WTC11 (cell line): ENCODE measurements at regions of chr19 and their contacts with region 1.

Region 1: GRCh38 chr19:4524808-4525562 is 6.7 kb upstream of the PLIN4 start:
- DNase-seq: peak; percentile 87
- ATAC-seq: peak; percentile 82
- H3K4me3 Mint-ChIP-seq: no peak overlapping the region
- H3K27ac Mint-ChIP-seq: no peak overlapping the region
- H3K4me1 Mint-ChIP-seq: no peaks in the 10 kb centered on the region
- H3K27me3 Mint-ChIP-seq: peaks cover 35% of the 10 kb centered on the region
- CTCF ChIP-seq: peak; percentile 69; the same call in 1 of the 2 replicates

Region 2: DNA sequence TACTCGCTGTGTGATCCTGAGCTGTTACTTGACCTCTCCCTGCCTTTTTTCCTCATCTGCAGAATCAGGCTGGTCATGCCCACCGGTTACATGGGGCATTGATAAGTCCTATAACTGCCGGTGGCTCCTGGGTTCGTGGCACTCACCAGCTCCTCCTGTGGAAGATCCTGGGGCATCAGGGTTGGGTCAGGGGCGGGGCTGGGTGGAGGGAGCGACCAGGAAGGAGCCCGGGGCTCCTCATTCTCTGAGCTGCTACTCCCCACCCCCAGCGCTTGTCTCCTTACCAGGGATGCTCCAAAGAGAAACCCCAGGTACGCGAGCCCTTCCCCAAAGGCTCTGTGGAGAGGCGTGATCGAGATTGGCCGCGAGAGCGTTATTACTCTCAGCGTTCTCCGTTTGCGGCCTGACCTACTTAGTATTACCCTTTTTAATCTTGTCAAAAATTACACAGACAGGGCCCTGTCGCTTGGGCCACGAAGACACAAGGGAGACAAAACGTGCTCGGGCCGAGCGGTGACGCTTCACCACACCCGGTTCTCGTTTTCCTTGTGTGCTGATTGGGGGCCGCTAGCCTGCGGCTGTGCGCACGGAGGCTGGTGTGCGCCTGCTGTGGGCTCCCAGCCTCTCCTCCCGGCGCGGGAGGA is 42.1 kb before region 1 on chr19:
- CTCF ChIA-PET with region 1: interaction called, 12 read pairs
- POLR2A ChIA-PET with region 1: no interaction called
- DNase-seq: no peak
- ATAC-seq: peak; percentile 52; the same call in 1 of the 2 replicates
- H3K4me3 Mint-ChIP-seq: no peak overlapping the region
- H3K27ac Mint-ChIP-seq: no peak overlapping the region
- H3K4me1 Mint-ChIP-seq: no peaks in the 10 kb centered on the region
- H3K27me3 Mint-ChIP-seq: no peaks in the 10 kb centered on the region
- CTCF ChIP-seq: no peak

Region 3: DNA sequence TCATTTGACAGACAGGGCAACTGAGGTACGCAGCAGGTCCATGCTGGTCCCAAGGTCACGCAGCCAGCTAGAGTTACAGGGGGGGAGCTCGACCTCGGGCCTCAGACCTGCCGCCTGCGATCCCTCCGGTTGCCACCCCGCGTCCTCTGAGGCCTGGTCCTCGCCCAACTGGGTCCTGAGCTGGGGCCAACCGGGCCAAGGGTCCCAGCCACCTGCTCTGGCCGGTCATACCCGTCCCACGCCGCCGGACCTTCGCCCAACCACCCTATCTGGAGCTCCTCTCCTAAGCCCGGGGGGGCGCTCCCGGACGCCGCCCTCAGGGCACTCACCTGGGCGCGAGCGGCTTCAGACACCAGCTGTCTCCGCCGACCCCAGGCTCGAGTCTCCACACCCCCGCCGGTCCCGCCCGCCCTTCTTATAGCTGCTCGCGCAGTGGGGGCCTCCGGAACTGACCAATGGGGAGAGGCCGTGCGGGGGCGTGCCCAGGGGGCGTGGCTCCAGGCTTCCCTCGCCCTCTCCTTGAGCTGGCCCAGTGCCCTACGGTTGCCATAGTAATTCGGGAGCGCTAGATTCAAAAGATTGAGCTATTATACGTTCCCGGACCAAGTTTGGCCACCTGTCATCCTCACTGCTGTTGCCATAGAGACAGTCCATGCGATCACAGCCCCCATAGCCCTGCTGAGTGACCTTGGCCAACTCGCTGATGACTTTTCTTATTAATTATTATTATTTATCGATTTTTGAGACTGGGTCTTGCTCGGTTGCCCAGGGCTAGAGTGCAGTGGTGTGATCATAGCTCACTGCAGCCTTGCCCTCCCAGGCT is 10.1 kb after region 1 on chr19 and contains the start of gene PLIN5:
- CTCF ChIA-PET with region 1: interaction called, 285 read pairs
- POLR2A ChIA-PET with region 1: interaction called, 9 read pairs
- DNase-seq: peak; percentile 97
- ATAC-seq: peak; percentile 93
- H3K4me3 Mint-ChIP-seq: peak within 1 kb of the TSS; percentile 53
- H3K27ac Mint-ChIP-seq: no peak within 1 kb of the TSS
- H3K4me1 Mint-ChIP-seq: peaks cover 3% of the 10 kb centered on the region; the same call in 1 of the 2 replicates
- H3K27me3 Mint-ChIP-seq: peaks cover 60% of the 10 kb centered on the region
- CTCF ChIP-seq: no peak
- total RNA-seq, gene PLIN5: 3.3 to 4.2 TPM (median 3.9 TPM) in 3 replicates

Region 4: GRCh38 chr19:4606921-4607678 is 82.1 kb after region 1 on chr19:
- CTCF ChIA-PET with region 1: interaction called, 16 read pairs
- POLR2A ChIA-PET with region 1: no interaction called
- DNase-seq: peak; percentile 53
- ATAC-seq: peak; percentile 71
- H3K4me3 Mint-ChIP-seq: peak overlapping the region; percentile 27
- H3K27ac Mint-ChIP-seq: no peak overlapping the region
- H3K4me1 Mint-ChIP-seq: peaks cover 15% of the 10 kb centered on the region
- H3K27me3 Mint-ChIP-seq: peaks cover 30% of the 10 kb centered on the region
- CTCF ChIP-seq: no peak

Region 5: DNA sequence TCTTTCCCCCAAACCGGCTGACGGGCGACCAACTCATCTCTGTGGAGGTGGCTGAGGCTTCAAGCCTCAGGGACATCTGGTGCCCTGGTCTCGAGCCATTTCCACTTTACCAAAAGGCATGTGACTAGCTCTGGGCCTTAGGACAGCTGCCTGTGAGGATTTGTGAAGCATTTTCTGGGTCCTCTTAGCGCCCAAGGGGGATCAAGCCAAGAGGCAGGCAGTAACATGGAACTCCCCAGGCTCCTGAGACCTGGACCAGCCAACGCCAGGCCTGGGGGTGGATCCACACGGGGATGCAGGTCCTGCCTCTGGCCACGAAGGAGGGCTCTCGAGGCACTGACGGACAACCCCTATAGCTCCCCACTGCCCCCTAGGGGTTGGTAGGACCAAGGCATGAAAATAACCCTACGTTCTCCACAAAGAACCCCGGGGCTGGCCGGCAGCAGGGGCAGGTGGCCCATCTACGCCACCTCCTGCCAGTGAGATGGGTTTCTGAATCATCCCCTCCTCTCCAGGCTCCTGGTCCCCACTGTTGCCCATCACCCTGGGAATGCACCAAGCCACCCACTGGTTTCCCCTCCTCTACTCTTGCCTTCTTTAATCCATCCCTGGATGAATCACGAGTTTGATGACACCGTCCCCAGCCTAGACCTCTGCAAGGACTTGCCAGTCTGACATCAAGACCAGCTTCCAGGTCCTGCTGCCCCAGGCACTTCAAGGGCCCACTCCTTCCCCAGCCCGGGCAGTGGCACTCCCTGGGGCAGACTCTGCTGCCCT is 152.2 kb after region 1 on chr19:
- CTCF ChIA-PET with region 1: interaction called, 15 read pairs
- POLR2A ChIA-PET with region 1: no interaction called
- DNase-seq: peak; percentile 87
- ATAC-seq: peak; percentile 48
- H3K4me3 Mint-ChIP-seq: no peak overlapping the region
- H3K27ac Mint-ChIP-seq: peak overlapping the region; percentile 30; the same call in 1 of the 2 replicates
- H3K4me1 Mint-ChIP-seq: peaks cover 12% of the 10 kb centered on the region
- H3K27me3 Mint-ChIP-seq: no peaks in the 10 kb centered on the region
- CTCF ChIP-seq: peak; percentile 78

Region 6: DNA sequence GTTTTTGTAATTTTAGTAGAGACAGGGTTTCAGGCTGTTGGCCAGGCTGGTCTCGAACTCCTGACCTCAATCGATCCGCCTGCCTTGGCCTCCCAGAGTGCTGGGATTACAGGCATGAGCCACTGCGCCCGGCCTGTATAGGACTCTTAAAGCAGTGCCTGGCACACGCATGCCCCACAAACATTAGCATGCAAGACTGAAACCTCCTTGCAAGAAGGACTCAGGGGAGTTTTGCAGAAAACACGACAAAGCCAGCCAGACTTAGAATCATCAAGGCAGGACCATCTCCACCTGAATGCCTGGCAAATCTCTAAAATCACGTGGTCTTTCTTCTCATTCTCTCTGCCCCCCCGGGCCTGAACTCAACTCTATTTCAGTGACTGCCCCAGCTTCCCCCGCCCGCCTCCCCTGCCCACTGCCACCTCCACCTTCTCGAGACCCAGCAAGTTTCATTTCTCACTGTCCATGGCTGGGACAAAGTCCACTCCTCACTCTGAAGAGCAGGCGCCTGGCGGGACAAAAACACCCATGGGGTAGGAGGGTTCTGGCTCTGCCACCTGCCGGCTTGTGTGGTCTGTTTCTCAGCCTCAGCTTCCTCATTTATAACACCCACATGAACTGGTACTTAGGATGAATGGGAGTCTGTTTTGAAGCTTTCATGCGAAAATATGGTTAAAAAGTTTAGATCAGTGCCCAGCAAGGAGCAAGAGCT is 304.2 kb after region 1 on chr19:
- CTCF ChIA-PET with region 1: no interaction called
- POLR2A ChIA-PET with region 1: no interaction called
- DNase-seq: no peak
- ATAC-seq: no peak
- H3K4me3 Mint-ChIP-seq: no peak overlapping the region
- H3K27ac Mint-ChIP-seq: no peak overlapping the region
- H3K4me1 Mint-ChIP-seq: no peaks in the 10 kb centered on the region
- H3K27me3 Mint-ChIP-seq: peaks cover 29% of the 10 kb centered on the region
- CTCF ChIP-seq: no peak

Region 7: DNA sequence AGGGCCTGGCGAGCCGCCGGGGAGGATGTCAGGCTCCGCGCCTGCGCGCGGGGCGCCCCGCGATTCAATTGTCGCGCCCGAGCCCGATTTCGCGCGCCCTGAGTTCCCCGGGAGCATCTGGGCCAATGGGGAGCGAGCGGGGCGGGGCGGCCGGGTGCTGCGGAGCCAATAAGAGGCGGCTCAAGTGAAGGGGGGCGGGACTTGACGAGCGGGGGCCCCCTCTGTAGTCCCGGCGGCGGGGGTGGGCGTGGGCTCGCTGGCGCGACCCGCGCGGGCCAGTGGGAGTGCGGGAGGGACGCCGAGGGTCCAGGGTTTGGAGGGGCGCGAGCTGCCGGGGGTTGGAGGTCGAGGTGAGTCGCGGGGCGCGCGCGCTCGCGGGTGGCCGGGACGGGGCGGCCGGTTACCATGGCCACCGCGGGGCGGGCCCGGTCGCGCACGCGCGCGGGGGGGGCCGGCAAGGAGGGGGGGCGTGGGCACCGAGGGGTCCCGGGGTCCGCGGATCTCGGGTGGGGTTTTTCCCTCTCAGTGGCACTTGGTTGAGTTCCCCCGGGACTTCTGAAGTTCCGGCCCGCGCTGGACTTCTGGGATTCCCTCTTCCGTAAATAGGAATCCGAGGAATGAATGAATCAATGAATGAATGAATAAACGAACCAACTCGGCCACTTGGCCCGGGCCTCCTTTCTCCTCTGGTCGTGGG is 385.1 kb after region 1 on chr19:
- CTCF ChIA-PET with region 1: no interaction called
- POLR2A ChIA-PET with region 1: no interaction called
- DNase-seq: peak; percentile 92
- ATAC-seq: peak; percentile 86
- H3K4me3 Mint-ChIP-seq: peak overlapping the region; percentile 77
- H3K27ac Mint-ChIP-seq: no peak overlapping the region
- H3K4me1 Mint-ChIP-seq: peaks cover 22% of the 10 kb centered on the region
- H3K27me3 Mint-ChIP-seq: peaks cover 28% of the 10 kb centered on the region
- CTCF ChIP-seq: no peak